Activated CD4-positive, alpha-beta T cell treated with anti-CD3 and anti-CD28 coated beads for 36 hours (primary cell): ENCODE measurements at regions of chr7 and their contacts with region 1.

Region 1: GRCh38 chr7:148698397-148699023 is at the start of gene CUL1:
- DNase-seq: peak; percentile 91
- ATAC-seq: peak; percentile 67
- H3K4me3 Mint-ChIP-seq: peak within 1 kb of the TSS; percentile 91
- H3K27ac Mint-ChIP-seq: peak within 1 kb of the TSS; percentile 97
- H3K4me1 Mint-ChIP-seq: peaks cover 59% of the 10 kb centered on the region
- H3K27me3 Mint-ChIP-seq: no peaks in the 10 kb centered on the region
- total RNA-seq, gene CUL1: 72.7 to 76.7 TPM

Region 2: DNA sequence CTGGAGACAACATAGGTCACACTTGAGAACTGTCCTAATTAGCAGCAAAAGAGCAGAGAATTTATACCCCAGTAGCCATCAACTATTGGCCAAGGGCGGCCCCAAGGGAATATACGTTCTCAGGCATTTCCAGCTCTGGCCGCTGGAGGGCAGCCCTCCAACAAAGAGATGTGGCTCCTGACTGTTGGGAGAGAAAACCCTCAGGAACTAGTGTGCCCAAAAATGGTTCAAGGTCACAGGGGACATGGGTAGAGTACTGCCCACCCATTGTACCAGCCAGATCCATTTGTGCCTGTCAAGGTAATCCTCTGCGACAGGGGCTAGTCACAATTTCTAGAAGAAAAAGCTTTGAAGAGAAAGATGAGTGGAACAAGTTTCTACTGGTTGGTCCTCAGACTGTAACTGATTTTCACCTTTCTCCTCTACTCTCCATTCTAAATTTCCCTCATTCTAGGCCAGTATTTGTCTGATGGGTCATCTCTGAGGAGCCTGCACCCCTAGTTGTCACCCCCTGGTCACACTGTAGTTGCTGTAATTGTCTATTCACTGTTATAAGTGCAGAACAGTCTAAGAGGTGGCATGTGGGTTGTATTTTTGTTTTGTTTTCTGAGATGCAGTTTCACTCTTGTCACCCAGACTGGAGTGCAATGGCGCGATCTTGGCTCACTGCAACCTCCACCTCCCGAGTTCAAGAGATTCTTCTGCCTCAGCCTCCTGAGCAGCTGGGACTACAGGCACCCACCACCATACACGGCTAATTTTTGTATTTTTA is 122.7 kb before region 1 on chr7:
- CTCF ChIA-PET with region 1: interaction called, 3 read pairs
- POLR2A ChIA-PET with region 1: interaction called, 4 read pairs
- intact Hi-C with region 1: loop called in 1 of 2 experiments (anchors 2 kb)
- DNase-seq: peak; percentile 82
- ATAC-seq: peak; percentile 86
- H3K4me3 Mint-ChIP-seq: no peak overlapping the region
- H3K27ac Mint-ChIP-seq: no peak overlapping the region
- H3K4me1 Mint-ChIP-seq: peaks cover 13% of the 10 kb centered on the region
- H3K27me3 Mint-ChIP-seq: peaks cover 7% of the 10 kb centered on the region

Region 3: GRCh38 chr7:148633761-148634160 is 64.7 kb before region 1 on chr7:
- CTCF ChIA-PET with region 1: no interaction called
- POLR2A ChIA-PET with region 1: no interaction called
- intact Hi-C with region 1: loop called (anchors 2 to 10 kb)
- DNase-seq: no peak
- ATAC-seq: peak; percentile 9
- H3K4me3 Mint-ChIP-seq: no peak overlapping the region
- H3K27ac Mint-ChIP-seq: no peak overlapping the region
- H3K4me1 Mint-ChIP-seq: peaks cover 18% of the 10 kb centered on the region
- H3K27me3 Mint-ChIP-seq: no peaks in the 10 kb centered on the region

Region 4: GRCh38 chr7:148645898-148646297 is 52.6 kb before region 1 on chr7:
- CTCF ChIA-PET with region 1: no interaction called
- POLR2A ChIA-PET with region 1: no interaction called
- intact Hi-C with region 1: no loop called
- DNase-seq: no peak
- ATAC-seq: no peak
- H3K4me3 Mint-ChIP-seq: no peak overlapping the region
- H3K27ac Mint-ChIP-seq: no peak overlapping the region
- H3K4me1 Mint-ChIP-seq: no peaks in the 10 kb centered on the region
- H3K27me3 Mint-ChIP-seq: peaks cover 6% of the 10 kb centered on the region

Region 5: GRCh38 chr7:148738737-148739535 is 40.4 kb after region 1 on chr7:
- CTCF ChIA-PET with region 1: no interaction called
- POLR2A ChIA-PET with region 1: no interaction called
- intact Hi-C with region 1: no loop called
- DNase-seq: no peak
- ATAC-seq: peak; percentile 55
- H3K4me3 Mint-ChIP-seq: no peak overlapping the region
- H3K27ac Mint-ChIP-seq: no peak overlapping the region
- H3K4me1 Mint-ChIP-seq: peaks cover 29% of the 10 kb centered on the region
- H3K27me3 Mint-ChIP-seq: no peaks in the 10 kb centered on the region

Region 6: GRCh38 chr7:148914208-148914777 is 215.8 kb after region 1 on chr7:
- CTCF ChIA-PET with region 1: no interaction called
- POLR2A ChIA-PET with region 1: interaction called, 4 read pairs
- intact Hi-C with region 1: loop called (anchors 1 to 2 kb)
- DNase-seq: peak; percentile 82
- ATAC-seq: peak; percentile 62
- H3K4me3 Mint-ChIP-seq: peak overlapping the region; percentile 47
- H3K27ac Mint-ChIP-seq: peak overlapping the region; percentile 98
- H3K4me1 Mint-ChIP-seq: peaks cover 73% of the 10 kb centered on the region
- H3K27me3 Mint-ChIP-seq: no peaks in the 10 kb centered on the region

Region 7: DNA sequence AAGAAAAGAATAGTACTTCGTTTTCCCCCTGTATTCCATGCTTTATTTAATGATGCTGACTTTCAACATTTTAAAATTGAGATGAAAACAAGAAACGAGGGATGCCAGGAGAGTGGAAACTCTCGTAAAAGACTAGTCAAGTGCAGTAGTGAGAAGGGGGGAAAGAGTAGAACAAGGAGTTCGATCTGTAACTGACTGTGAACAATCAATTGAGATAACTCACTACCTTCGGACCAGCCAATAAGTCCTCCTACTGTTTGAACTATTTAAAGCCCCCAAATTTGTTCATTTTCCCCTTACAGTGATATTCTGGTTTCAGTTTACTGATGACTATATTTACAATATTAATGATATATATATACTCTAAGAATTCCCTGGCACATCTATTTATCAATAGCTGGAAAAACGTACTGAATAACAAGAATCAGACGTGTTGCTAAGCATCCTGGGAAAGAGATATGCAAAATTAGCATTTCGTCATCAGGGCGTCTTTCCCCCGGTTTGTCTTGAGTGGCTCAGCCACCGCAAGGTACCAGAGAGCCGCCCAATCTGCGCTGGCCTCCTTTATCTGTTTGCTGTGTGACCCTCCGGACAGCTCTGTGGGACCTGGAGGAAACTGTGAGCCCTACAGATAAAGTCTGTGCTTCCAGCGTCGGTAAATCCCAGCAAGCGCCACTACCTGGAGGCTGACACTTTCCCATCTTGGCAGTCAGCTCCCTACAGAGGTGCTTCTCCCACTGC is 288.7 kb after region 1 on chr7:
- CTCF ChIA-PET with region 1: no interaction called
- POLR2A ChIA-PET with region 1: no interaction called
- intact Hi-C with region 1: loop called in 1 of 2 experiments (anchors 1 kb)
- DNase-seq: peak; percentile 88
- ATAC-seq: peak; percentile 84
- H3K4me3 Mint-ChIP-seq: peak overlapping the region; percentile 90
- H3K27ac Mint-ChIP-seq: peak overlapping the region; percentile 97
- H3K4me1 Mint-ChIP-seq: peaks cover 40% of the 10 kb centered on the region
- H3K27me3 Mint-ChIP-seq: peaks cover 2% of the 10 kb centered on the region

Region 8: GRCh38 chr7:149125863-149126661 is 427.6 kb after region 1 on chr7 and contains the start of gene ZNF425:
- CTCF ChIA-PET with region 1: no interaction called
- POLR2A ChIA-PET with region 1: no interaction called
- intact Hi-C with region 1: loop called in 1 of 2 experiments (anchors 5 kb)
- DNase-seq: peak; percentile 96
- ATAC-seq: peak; percentile 88
- H3K4me3 Mint-ChIP-seq: peak within 1 kb of the TSS; percentile 83
- H3K27ac Mint-ChIP-seq: peak within 1 kb of the TSS; percentile 99
- H3K4me1 Mint-ChIP-seq: peaks cover 21% of the 10 kb centered on the region
- H3K27me3 Mint-ChIP-seq: no peaks in the 10 kb centered on the region
- total RNA-seq, gene ZNF425: 0.43 to 0.95 TPM